Posterior vena cava (tissue), 2 donors: ENCODE measurements at regions of chr14 and their contacts with region 1.

Region 1: DNA sequence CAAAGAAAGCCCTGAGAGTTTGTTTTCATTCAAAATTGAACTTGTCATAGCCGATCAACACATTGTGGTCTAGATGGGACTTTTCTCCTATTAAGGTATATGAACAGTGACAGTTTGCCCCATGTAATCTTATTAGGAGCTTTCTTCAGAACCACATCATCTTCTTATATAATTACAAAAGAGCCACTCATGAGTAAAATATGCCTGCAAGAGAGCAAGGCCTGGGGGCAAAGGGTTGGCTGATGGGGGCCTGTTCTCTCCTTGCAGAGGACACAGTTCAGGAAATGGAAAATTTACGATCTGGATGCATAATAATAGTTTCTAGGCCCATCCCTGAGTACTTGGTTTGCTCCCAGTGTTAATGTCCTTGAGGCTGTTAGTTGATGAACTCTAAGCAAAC is 87.8 kb downstream of the FLRT2 start:
- DNase-seq: no peak

Region 2: DNA sequence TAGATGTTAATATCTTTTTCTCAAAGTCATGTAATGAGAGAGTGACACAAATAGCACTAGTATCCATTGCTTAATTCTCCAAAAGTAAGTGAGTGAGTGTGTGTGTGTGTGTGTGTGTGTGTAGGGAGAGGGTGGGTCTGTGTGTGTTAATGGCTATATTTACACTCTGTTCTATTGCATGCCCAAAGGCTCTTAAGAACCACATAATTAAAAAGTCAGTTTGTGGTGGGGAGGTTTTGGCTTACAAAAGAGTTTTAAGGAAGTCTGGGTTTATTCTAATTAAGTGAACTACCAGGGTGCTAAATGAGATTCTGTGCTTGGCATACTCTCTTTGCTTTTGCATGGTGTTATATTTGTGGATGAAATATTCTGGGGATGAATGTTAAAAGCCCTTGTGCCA is 1985.4 kb before region 1 on chr14:
- intact Hi-C with region 1: loop called in 1 of 2 experiments (anchors 5 kb)
- DNase-seq: no peak

Region 3: GRCh38 chr14:86613126-86613525 is 995.3 kb after region 1 on chr14:
- intact Hi-C with region 1: no loop called
- DNase-seq: no peak